Mammary epithelial cell (primary cell): ENCODE measurements at regions of chr6 and their contacts with region 1.

Region 1: DNA sequence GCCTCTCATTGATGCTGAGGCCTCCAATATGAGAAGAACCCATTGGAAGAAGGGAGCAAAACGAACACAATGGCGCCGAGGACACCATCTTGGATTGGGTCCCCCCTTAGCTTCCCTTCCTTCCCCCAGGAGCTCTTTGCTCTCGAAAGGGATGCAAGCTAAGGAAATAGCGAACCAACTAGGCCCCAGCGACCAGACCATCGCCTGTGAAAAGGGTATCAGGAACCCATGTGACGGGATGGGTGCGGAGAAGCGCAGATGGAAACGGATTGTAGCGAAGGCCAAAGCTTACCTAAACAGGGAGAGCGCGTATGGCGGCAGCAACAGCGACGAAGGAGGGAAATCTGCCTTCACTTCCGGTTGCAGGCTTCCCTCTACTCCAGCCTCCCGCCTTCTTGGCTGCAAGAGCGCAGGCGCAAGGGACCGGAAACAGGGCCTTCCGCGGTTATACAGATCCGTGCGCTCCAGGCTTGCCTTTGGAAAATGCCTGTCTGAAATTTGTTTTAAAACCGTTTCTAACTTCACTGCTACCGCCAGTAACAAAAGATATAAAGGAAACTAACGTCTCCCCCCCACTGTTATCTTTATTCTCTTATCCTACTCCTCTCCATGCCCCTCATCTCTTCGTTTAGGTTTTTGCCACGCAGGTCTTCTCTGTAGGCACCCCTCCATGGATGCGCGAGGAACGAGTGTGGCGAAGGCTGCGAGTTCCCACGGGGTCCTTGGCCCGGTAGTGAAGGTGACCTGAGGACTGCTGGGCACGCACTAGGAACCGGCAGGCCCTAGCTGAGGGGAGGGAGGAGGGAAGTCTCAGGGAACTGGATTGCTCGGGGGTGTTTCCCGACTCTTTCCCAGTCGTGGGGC is at the start of gene DDX39B:
- DNase-seq: peak; percentile 94
- H3K4me3 ChIP-seq: peak within 1 kb of the TSS; percentile 72 to 94 (median 75)
- H3K27ac ChIP-seq: peak within 1 kb of the TSS; percentile 97
- H3K4me1 ChIP-seq: peaks cover 32% of the 10 kb centered on the region
- H3K27me3 ChIP-seq: no peaks in the 10 kb centered on the region
- CTCF ChIP-seq: no peak
- total RNA-seq, gene DDX39B: 263 to 409 TPM

Region 2: DNA sequence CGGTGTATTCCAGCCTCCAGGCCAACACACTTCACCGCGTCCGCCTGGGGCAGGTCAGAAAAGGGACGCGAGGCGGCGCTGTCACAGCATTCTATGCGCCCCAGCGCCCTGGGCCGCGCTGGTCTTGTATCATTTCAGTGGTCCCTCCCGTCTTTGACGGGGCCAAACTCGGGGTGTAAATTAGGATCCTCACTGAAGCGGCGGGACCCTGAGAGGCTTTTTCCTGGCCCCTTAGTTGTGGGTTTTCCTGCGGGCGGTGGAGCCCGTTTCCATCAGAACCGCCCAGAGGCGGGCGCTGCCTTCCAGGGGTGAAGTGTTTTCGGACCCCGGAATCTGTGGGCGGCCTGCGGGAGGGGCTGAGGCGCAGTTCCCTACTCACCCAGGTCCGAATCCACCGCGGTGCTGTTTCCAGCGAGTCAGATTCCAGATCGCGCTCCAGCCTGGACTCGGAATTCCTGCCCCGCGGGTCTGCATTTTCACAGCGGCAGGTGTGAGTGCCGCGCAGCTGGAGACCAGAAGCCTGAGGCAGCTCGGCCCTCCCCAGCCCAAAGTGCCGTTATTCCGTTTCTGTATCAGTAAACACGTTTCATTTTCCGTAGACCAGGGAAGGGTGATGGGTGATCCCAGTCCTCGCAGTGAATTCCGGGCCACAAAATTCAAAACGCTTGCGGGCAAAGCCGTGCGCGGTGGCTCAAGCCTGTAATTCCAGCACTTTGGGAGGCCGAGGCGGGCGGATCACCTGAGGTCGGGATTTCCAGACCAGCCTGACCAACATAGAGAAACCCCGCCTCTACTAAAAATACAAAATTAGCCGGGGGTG is 47.8 kb before region 1 on chr6:
- CTCF ChIA-PET with region 1: no interaction called
- dilution Hi-C with region 1: no loop called
- in situ Hi-C with region 1: loop called in 1 of 2 experiments (anchors 5 kb)
- intact Hi-C with region 1: loop called (anchors 1 kb)
- DNase-seq: peak; percentile 63
- H3K4me3 ChIP-seq: peak overlapping the region; percentile 65 to 73 (median 71)
- H3K27ac ChIP-seq: peak overlapping the region; percentile 79
- H3K4me1 ChIP-seq: peaks cover 23% of the 10 kb centered on the region
- H3K27me3 ChIP-seq: no peaks in the 10 kb centered on the region
- CTCF ChIP-seq: peak; percentile 77 to 95

Region 3: GRCh38 chr6:31597006-31597405 is 55.1 kb after region 1 on chr6:
- CTCF ChIA-PET with region 1: interaction called, 4 read pairs
- dilution Hi-C with region 1: no loop called
- in situ Hi-C with region 1: loop called (anchors 5 kb)
- intact Hi-C with region 1: loop called (anchors 1 kb)
- DNase-seq: no peak
- H3K4me3 ChIP-seq: no peak overlapping the region
- H3K27ac ChIP-seq: no peak overlapping the region
- H3K4me1 ChIP-seq: no peaks in the 10 kb centered on the region
- H3K27me3 ChIP-seq: no peaks in the 10 kb centered on the region
- CTCF ChIP-seq: peak; percentile 26 to 27

Region 4: GRCh38 chr6:31645325-31645724 is 103.4 kb after region 1 on chr6:
- CTCF ChIA-PET with region 1: no interaction called
- dilution Hi-C with region 1: loop called (anchors 5 kb)
- in situ Hi-C with region 1: no loop called
- intact Hi-C with region 1: no loop called
- DNase-seq: no peak
- H3K4me3 ChIP-seq: no peak overlapping the region
- H3K27ac ChIP-seq: no peak overlapping the region
- H3K4me1 ChIP-seq: no peaks in the 10 kb centered on the region
- H3K27me3 ChIP-seq: no peaks in the 10 kb centered on the region
- CTCF ChIP-seq: no peak

Region 5: DNA sequence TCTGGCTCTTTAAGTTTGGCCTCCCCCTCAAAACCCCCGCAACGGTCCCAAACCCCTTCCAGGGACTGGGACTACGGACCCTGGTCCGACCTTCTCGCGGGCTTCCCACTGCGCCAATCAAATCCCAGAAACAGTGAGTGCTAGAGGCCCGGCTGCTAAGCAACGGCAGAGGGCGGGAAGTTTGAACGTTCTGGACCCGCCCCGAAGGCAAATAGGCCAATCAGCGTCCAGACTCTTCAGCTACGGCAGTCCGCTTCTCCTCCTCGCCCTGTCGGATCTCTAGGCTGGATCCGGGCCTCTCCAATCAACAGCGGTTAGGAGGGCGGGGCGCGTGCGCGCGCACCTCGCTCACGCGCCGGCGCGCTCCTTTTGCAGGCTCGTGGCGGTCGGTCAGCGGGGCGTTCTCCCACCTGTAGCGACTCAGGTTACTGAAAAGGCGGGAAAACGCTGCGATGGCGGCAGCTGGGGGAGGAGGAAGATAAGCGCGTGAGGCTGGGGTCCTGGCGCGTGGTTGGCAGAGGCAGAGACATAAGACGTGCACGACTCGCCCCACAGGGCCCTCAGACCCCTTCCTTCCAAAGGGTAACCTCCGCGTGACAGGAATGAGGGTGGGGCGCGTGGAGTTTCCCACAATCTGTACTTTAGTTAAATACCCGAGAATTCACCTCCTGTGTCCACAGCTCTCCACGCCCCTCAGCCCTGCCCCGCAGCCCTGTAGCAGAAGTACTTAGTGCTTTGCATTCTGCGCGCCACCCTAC is 197.9 kb after region 1 on chr6 and contains the start of gene MSH5:
- CTCF ChIA-PET with region 1: no interaction called
- dilution Hi-C with region 1: no loop called
- in situ Hi-C with region 1: no loop called
- intact Hi-C with region 1: loop called (anchors 10 kb)
- DNase-seq: peak; percentile 99
- H3K4me3 ChIP-seq: peak within 1 kb of the TSS; percentile 67 to 76 (median 74)
- H3K27ac ChIP-seq: peak within 1 kb of the TSS; percentile 83
- H3K4me1 ChIP-seq: peaks cover 34% of the 10 kb centered on the region
- H3K27me3 ChIP-seq: no peaks in the 10 kb centered on the region
- CTCF ChIP-seq: no peak
- total RNA-seq, gene MSH5: 9.3 to 28.3 TPM